ENCODE measurements at regions of chr15 and their contacts with region 1.

Region 1: DNA sequence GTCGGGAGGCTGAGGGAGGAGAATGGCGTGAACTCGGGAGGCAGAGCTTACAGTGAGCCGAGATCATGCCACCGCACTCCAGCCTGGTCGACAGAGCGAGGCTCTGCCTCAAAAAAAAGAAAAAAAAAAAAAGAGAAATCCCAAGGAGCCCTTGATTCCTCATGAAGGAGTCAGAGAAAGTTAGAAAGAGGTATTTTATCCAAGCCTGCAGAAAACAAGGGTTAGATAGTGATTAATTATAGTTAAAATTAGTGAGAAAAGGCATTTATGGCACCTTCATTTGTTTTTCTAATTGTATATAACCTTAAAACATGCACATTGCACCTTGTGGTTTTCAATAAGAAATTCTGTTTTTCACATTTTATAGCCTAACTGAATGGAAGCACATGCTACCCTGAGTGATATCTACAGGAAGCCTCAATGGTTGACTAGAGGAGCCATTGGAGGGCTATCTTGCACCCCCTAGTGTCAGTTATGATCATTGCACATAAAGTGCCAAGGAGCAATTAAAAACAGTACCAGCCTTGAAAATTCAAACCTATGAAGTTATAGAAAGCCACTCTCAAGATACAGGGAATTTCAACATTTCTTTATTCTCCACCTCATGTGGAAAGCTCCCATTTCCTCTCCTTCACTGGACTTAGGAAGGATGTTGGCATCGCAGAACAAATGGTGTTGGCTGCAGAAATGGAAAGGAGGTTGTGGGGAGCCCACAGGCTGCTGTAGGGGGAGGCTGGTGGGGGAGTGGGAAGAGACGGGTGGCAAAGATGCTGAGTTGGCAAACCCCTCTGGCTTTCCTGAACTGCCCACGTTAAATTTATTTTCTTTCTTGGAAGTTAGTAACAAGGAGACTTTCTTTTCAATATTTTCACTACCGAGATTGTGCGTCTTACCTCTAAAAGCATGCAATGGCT is 48.5 kb downstream of the ITGA11 start:
- DNase-seq: peak; percentile 74
- H3K4me3 ChIP-seq: no peak overlapping the region
- H3K27ac ChIP-seq: peak overlapping the region in 1 of 4 donors; percentile 27
- H3K4me1 ChIP-seq: peaks cover 0 to 14% (median 5%) of the 10 kb centered on the region in 4 donors
- H3K27me3 ChIP-seq: peaks cover 0 to 18% (median 0%) of the 10 kb centered on the region in 4 donors
- CTCF ChIP-seq: peak; percentile 66 to 77 (median 67)
- EP300 ChIP-seq: no peak
- POLR2A ChIP-seq: no peak

Region 2: DNA sequence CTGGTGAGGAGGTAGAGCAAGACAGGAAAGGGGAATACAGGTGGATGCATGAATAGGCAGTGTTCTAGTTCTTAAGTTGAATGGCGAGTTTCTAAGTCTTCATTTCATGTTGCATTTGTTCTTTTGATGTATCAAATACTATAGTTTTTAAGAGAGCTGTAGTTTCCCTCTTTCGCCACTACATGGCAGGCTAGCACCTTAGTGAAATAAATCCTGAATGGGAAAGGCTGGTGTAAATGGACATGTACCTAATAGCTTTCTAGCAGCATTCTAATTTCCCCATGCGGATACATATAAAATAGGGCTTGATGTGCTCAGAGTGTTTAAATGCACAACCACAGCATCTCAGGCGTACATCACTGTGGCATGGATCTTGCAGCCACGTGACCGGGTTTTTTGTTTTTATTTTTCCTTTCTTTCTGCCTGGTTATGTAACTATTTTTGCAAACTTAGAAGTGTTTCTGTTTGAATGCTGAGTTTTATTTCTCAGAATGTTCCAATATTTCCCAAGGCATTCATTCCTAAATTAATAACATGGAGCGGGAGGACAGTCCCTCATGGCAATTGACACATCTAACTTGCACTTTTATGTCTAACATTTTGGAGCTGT is 130.4 kb before region 1 on chr15:
- intact Hi-C with region 1: loop called (anchors 2 kb)
- DNase-seq: no peak
- H3K4me3 ChIP-seq: no peak overlapping the region
- H3K27ac ChIP-seq: no peak overlapping the region
- H3K4me1 ChIP-seq: peaks cover 13 to 33% (median 23%) of the 10 kb centered on the region in 4 donors
- H3K27me3 ChIP-seq: no peaks in the 10 kb centered on the region
- CTCF ChIP-seq: peak; percentile 85 to 89 (median 89)
- EP300 ChIP-seq: no peak
- POLR2A ChIP-seq: no peak